Caco-2 (cell line): ENCODE measurements at regions of chr16 and their contacts with region 1.

Region 1: DNA sequence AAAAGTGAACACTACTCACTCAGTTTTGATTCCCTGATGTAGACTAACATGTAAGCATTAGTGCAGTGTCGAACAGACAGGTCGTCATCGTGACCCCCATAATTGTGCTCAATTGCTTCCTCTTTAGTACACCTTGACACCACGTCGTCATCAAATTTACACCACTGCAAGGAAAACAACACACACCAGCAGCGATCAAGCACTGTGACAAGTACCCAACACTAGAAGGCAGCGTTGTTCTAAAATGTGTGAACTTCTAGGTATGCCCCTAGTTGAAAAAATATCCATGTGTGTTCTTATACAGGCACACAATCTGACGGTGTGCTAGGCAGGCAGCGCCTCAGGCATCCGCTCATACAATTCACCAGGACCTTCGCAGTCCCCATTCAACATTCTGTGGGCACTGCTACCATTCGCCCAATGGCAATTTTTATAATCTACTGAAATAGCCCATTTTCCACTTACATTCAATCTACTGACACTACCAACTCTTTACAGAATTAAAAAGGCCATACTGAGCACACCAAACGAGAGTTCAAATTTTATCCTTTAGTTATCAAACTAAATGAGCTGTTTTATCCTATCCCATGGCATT is 23.1 kb downstream of the LITAFD start:
- DNase-seq: peak in 1 of 2 experiments; percentile 42
- H3K4me3 ChIP-seq: no peak overlapping the region
- H3K4me3 Mint-ChIP-seq: no peak overlapping the region
- H3K27ac Mint-ChIP-seq: peak overlapping the region; percentile 22
- H3K4me1 ChIP-seq: peaks cover 10% of the 10 kb centered on the region
- H3K4me1 Mint-ChIP-seq: peaks cover 13% of the 10 kb centered on the region
- H3K27me3 ChIP-seq: no peaks in the 10 kb centered on the region
- H3K27me3 Mint-ChIP-seq: no peaks in the 10 kb centered on the region
- CTCF ChIP-seq: peak; percentile 35 to 64

Region 2: DNA sequence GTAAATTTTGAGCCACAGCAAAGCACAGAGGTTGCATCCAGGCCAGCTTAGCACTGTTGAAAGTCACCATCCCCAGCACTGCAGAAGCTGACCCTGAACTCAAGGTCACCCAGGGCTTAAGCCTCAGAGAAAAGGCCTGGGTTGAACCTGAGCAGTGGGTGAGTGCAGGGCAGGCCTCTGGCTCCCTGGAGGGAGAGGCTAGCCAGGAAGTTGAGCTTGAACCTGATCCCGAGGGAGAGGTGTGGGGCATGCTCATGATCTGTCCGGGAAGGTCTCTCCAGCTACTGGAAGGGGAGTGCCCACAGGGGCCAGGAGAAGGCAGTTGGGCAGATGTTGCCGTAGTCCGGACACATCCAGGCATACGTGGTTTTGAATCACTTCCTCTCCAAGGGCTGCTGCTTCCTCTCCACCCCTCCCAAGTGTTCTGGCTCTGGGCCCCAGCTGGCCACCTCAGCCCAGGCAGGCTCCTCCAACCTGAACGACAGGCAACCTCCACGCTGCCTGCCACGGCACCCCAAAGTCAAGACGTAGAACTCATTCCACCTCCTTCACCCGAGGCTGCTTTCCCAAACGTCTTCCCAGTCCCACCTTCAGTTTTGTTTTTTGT is 54.9 kb before region 1 on chr16:
- CTCF ChIA-PET with region 1: no interaction called
- POLR2A ChIA-PET with region 1: no interaction called
- intact Hi-C with region 1: no loop called
- DNase-seq: no peak
- H3K4me3 ChIP-seq: no peak overlapping the region
- H3K4me3 Mint-ChIP-seq: no peak overlapping the region
- H3K27ac Mint-ChIP-seq: peak overlapping the region; percentile 55
- H3K4me1 ChIP-seq: no peaks in the 10 kb centered on the region
- H3K4me1 Mint-ChIP-seq: no peaks in the 10 kb centered on the region
- H3K27me3 ChIP-seq: no peaks in the 10 kb centered on the region
- H3K27me3 Mint-ChIP-seq: no peaks in the 10 kb centered on the region
- CTCF ChIP-seq: no peak

Region 3: GRCh38 chr16:8936421-8936820 is 31.2 kb after region 1 on chr16:
- CTCF ChIA-PET with region 1: interaction called, 11 read pairs
- POLR2A ChIA-PET with region 1: no interaction called
- intact Hi-C with region 1: loop called (anchors 1 kb)
- DNase-seq: peak; percentile 63 to 72
- H3K4me3 ChIP-seq: no peak overlapping the region
- H3K4me3 Mint-ChIP-seq: no peak overlapping the region
- H3K27ac Mint-ChIP-seq: no peak overlapping the region
- H3K4me1 ChIP-seq: 0 out of 2 replicates have a peak, but pooled peaks cover 5% of the 10 kb centered on the region
- H3K4me1 Mint-ChIP-seq: peaks cover 29% of the 10 kb centered on the region
- H3K27me3 ChIP-seq: no peaks in the 10 kb centered on the region
- H3K27me3 Mint-ChIP-seq: no peaks in the 10 kb centered on the region
- CTCF ChIP-seq: peak; percentile 67 to 86

Region 4: GRCh38 chr16:8963825-8964441 is 58.7 kb after region 1 on chr16 and contains the start of gene USP7:
- CTCF ChIA-PET with region 1: no interaction called
- POLR2A ChIA-PET with region 1: no interaction called
- intact Hi-C with region 1: no loop called
- DNase-seq: peak; percentile 87 to 93
- H3K4me3 ChIP-seq: peak within 1 kb of the TSS; percentile 83
- H3K4me3 Mint-ChIP-seq: peak within 1 kb of the TSS; percentile 92
- H3K27ac Mint-ChIP-seq: peak within 1 kb of the TSS; percentile 68
- H3K4me1 ChIP-seq: peaks cover 15% of the 10 kb centered on the region
- H3K4me1 Mint-ChIP-seq: peaks cover 26% of the 10 kb centered on the region
- H3K27me3 ChIP-seq: no peaks in the 10 kb centered on the region
- H3K27me3 Mint-ChIP-seq: no peaks in the 10 kb centered on the region
- CTCF ChIP-seq: no peak
- total RNA-seq, gene USP7: 139 and 148 TPM in 2 replicates

Region 5: DNA sequence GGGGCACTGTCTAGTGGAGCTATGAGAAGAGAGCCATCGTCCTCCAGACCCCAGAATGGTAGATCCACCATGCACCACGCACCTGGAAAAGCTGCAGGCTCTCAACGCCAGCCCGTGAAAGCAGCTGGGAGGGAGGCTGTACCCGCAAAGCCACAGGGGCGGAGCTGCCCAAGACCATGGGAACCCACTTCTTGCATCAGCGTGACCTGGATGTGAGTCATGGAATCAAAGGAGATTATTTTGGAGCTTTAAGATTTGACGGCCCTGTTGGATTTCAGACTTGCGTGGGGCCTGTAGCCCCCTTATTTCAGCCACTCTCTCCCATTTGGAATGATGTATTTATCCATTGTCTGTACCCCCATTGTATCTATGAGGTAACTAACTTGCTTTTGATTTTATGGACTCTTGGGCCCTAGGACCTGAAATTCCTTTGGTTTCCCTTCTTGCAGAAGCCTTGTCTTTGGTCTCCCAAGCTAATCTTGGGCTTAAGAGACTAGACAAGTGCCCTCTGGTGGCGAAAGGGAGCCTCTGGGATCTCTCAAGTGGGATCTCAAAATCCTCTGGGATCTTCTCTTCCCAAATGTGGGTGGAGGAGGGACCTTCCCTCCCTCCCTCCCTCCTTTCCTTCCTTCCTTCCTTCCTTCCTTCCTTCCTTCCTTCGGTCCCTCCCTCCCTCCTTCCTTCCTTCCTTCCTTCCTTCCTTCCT is 128.0 kb after region 1 on chr16:
- CTCF ChIA-PET with region 1: no interaction called
- POLR2A ChIA-PET with region 1: no interaction called
- intact Hi-C with region 1: loop called (anchors 1 kb)
- DNase-seq: peak; percentile 43 to 49
- H3K4me3 ChIP-seq: no peak overlapping the region
- H3K4me3 Mint-ChIP-seq: no peak overlapping the region
- H3K27ac Mint-ChIP-seq: no peak overlapping the region
- H3K4me1 ChIP-seq: no peaks in the 10 kb centered on the region
- H3K4me1 Mint-ChIP-seq: no peaks in the 10 kb centered on the region
- H3K27me3 ChIP-seq: no peaks in the 10 kb centered on the region
- H3K27me3 Mint-ChIP-seq: no peaks in the 10 kb centered on the region
- CTCF ChIP-seq: peak; percentile 42 to 77

Region 6: DNA sequence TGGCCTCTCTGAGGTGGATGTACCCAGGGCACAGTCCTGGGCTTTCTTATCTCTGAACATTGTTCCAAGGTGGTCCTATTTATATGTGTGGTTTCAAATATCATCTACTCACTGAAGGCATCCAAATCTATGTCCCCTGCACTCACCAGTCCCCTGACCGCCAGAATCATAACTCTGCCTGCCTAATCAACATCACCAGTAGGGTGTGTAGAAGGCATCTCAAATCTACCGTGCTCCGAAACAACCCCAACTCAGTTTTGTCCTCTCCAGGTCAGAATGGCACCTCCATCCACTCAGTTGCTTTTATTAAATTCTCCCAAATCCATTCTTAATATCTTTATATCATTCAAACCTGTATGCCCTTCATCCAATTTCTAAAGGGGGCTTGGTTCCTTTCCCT is 740.6 kb after region 1 on chr16:
- CTCF ChIA-PET with region 1: no interaction called
- POLR2A ChIA-PET with region 1: no interaction called
- intact Hi-C with region 1: no loop called
- DNase-seq: no peak
- H3K4me3 ChIP-seq: no peak overlapping the region
- H3K4me3 Mint-ChIP-seq: no peak overlapping the region
- H3K27ac Mint-ChIP-seq: no peak overlapping the region
- H3K4me1 ChIP-seq: no peaks in the 10 kb centered on the region
- H3K4me1 Mint-ChIP-seq: peaks cover 4% of the 10 kb centered on the region
- H3K27me3 ChIP-seq: no peaks in the 10 kb centered on the region
- H3K27me3 Mint-ChIP-seq: peaks cover 5% of the 10 kb centered on the region
- CTCF ChIP-seq: peak in 1 of 2 experiments; percentile 11